ENCODE measurements at regions of chr4 and their contacts with region 1.

Region 1: GRCh38 chr4:73533515-73534422 is 52.2 kb downstream of the AFM start:
- DNase-seq: peak; percentile 62
- ATAC-seq: peak; percentile 99
- H3K4me3 ChIP-seq: 0 out of 6 replicates have a peak overlapping the region, but pooled peaks of 1 of the 3 experiments have one; percentile 12
- H3K27ac ChIP-seq: peak overlapping the region; percentile 14
- H3K4me1 ChIP-seq: peaks cover 37% of the 10 kb centered on the region
- H3K27me3 ChIP-seq: no peaks in the 10 kb centered on the region
- CTCF ChIP-seq: no peak
- EP300 ChIP-seq: no peak
- POLR2A ChIP-seq: no peak
- RAD21 ChIP-seq: no peak

Region 2: DNA sequence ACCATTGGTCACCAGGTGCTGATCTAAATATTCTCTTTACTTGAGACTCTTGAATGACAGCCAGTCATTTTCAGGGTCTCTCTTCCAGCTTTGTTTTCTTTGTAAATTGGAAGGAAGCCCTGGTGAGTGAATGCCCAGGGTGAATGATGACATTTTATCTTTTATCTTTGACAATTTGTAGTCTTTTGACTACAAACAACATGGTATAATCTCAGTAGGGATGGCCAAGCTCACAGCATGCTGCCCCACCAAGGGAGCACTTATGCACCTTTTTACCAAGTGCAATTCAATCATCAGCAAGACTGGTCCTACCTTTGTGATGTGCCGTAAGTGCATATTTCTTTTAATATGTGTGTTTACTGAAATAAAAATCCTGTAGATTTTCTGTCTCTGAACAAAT is 46.5 kb before region 1 on chr4:
- CTCF ChIA-PET with region 1: no interaction called
- POLR2A ChIA-PET with region 1: no interaction called
- in situ Hi-C with region 1: no loop called
- intact Hi-C with region 1: loop called (anchors 10 kb)
- DNase-seq: no peak
- ATAC-seq: no peak
- H3K4me3 ChIP-seq: no peak overlapping the region
- H3K27ac ChIP-seq: no peak overlapping the region
- H3K4me1 ChIP-seq: peaks cover 18% of the 10 kb centered on the region
- H3K27me3 ChIP-seq: no peaks in the 10 kb centered on the region
- CTCF ChIP-seq: no peak
- EP300 ChIP-seq: no peak
- POLR2A ChIP-seq: no peak
- RAD21 ChIP-seq: no peak